Activated naive CD4-positive, alpha-beta T cell treated with anti-CD3 and anti-CD28 coated beads for 36 hours (primary cell): ENCODE measurements at regions of chr20 and their contacts with region 1.

Region 1: DNA sequence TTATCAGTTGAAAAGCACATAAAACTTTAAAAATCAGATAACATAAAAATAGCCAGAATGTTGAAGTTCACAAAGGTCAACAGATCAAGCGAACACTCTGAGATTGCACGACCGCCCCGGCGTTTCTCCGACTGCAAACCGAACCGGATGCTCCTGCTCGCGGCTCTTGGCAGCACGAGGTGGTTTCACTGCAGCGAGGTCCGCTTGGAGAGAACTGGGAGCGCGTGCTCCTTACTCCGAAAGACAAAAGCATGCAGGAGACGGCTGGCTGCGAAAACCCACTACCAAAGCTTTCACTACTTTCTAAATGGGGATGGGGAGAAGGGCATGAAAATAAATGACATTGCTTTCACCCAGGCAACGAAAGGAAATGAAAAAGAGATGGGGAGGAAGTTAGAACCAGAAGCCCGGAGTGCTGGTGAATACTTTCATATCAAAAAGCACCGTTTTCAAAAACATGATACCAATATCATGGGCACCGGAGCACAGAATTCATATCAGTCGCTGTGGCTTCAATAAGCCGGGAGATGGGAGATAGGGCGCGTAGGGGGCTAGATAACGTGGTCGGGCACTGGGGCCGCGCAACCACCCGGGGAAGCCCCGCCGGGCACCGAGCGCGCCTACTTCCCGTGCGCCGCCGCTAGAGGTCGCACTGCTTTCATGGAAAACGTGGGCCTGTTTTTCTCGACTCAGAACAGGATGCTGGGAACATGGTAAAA is 8.3 kb upstream of the ANKRD60 start:
- DNase-seq: peak; percentile 91
- H3K4me3 Mint-ChIP-seq: peak overlapping the region; percentile 83
- H3K27ac Mint-ChIP-seq: peak overlapping the region; percentile 88
- H3K4me1 Mint-ChIP-seq: peaks cover 23% of the 10 kb centered on the region
- H3K27me3 Mint-ChIP-seq: no peaks in the 10 kb centered on the region

Region 2: GRCh38 chr20:57135856-57136255 is 1100.9 kb before region 1 on chr20:
- CTCF ChIA-PET with region 1: no interaction called
- intact Hi-C with region 1: no loop called
- DNase-seq: no peak
- H3K4me3 Mint-ChIP-seq: no peak overlapping the region
- H3K27ac Mint-ChIP-seq: no peak overlapping the region
- H3K4me1 Mint-ChIP-seq: no peaks in the 10 kb centered on the region
- H3K27me3 Mint-ChIP-seq: peaks cover 12% of the 10 kb centered on the region

Region 3: GRCh38 chr20:58388882-58389323 is 152.1 kb after region 1 on chr20 and contains the start of gene VAPB:
- CTCF ChIA-PET with region 1: interaction called, 3 read pairs
- intact Hi-C with region 1: loop called (anchors 5 kb)
- DNase-seq: peak; percentile 96
- H3K4me3 Mint-ChIP-seq: peak within 1 kb of the TSS; percentile 96
- H3K27ac Mint-ChIP-seq: peak within 1 kb of the TSS; percentile 90
- H3K4me1 Mint-ChIP-seq: peaks cover 42% of the 10 kb centered on the region
- H3K27me3 Mint-ChIP-seq: no peaks in the 10 kb centered on the region
- total RNA-seq, gene VAPB: 26.8 to 27.9 TPM

Region 4: GRCh38 chr20:58447511-58448391 is 211.0 kb after region 1 on chr20:
- CTCF ChIA-PET with region 1: interaction called, 7 read pairs
- intact Hi-C with region 1: loop called (anchors 1 kb)
- DNase-seq: peak; percentile 79
- H3K4me3 Mint-ChIP-seq: no peak overlapping the region
- H3K27ac Mint-ChIP-seq: peak overlapping the region; percentile 29
- H3K4me1 Mint-ChIP-seq: no peaks in the 10 kb centered on the region
- H3K27me3 Mint-ChIP-seq: no peaks in the 10 kb centered on the region

Region 5: DNA sequence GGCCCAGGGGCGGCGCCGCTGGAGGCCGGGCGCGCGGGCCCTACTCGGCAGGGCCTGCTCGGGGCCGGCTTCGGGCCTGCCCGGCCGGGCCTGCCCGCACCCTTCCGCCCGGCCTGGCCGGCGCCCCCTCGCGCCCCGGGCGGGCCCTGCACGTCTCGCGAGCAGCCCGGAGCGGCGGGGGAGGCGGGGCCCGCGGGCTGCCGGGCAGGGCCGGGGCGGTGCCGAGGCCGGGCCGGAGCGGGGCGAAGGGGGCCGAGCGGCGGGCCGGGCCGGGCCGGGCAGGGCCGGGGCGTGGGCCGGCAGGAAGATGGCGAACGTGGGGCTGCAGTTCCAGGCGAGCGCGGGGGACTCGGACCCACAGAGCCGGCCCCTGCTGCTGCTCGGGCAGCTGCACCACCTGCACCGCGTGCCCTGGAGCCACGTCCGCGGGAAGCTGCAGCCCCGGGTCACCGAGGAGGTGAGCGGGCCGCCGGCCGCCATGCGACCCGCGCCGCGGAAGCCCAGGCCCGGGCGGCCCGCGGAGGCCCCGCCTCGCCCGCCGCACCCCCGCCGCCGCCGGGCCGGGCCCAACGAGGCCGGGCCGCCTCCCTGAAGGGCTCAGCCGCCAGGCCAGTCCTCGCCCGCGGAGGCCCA is 455.9 kb after region 1 on chr20 and contains the start of gene NPEPL1:
- CTCF ChIA-PET with region 1: no interaction called
- intact Hi-C with region 1: loop called (anchors 5 kb)
- DNase-seq: peak; percentile 64
- H3K4me3 Mint-ChIP-seq: peak within 1 kb of the TSS; percentile 72
- H3K27ac Mint-ChIP-seq: peak within 1 kb of the TSS; percentile 52
- H3K4me1 Mint-ChIP-seq: peaks cover 9% of the 10 kb centered on the region
- H3K27me3 Mint-ChIP-seq: no peaks in the 10 kb centered on the region
- total RNA-seq, gene NPEPL1: 14.3 to 14.5 TPM

Region 6: DNA sequence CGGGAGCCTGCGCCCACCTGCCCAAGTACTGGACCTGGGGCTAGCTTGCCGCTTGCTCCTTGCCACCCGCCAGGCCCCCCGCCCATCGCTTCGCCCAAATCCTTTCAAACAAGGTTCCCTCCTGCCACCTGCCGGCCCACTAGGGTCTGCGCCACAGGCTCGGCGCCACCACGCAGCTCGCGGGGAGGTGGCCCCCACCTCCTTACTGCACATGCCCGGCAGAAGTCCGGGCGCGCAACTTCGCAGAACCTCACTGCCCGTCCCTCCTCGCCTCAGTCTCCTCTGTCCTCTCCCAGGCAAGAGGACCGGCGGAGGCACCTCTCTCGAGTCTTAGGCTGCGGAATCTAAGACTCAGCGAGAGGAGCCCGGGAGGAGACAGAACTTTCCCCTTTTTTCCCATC is 602.7 kb after region 1 on chr20:
- CTCF ChIA-PET with region 1: no interaction called
- intact Hi-C with region 1: loop called (anchors 5 kb)
- DNase-seq: peak; percentile 63
- H3K4me3 Mint-ChIP-seq: peak overlapping the region; percentile 51
- H3K27ac Mint-ChIP-seq: no peak overlapping the region
- H3K4me1 Mint-ChIP-seq: peaks cover 12% of the 10 kb centered on the region
- H3K27me3 Mint-ChIP-seq: peaks cover 44% of the 10 kb centered on the region

Region 7: DNA sequence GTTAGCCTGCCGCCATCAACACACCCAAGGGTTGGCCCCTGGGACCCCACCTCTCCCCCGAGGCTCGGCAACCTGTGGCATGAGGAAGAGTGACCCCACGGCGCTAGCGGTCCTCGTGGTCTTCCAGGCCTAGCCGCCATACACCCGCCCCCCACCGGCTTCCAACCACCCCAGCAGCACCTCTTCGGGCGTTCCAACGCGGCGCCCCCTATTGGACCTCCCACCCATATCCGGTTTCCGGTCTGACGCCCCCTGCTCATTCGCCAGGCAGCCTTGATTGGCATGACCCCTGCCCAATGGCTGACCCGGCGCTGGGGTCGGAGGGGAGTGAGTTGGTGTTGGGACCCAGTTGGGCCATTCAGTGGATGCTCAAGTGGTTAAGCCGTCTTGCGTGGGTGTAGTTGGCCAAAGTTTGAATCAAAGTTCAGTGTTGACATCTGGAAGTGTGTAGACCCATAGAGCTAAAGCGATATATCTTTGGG is 614.0 kb after region 1 on chr20 and contains the start of gene GNAS-AS1:
- CTCF ChIA-PET with region 1: no interaction called
- intact Hi-C with region 1: loop called (anchors 5 kb)
- DNase-seq: peak; percentile 92
- H3K4me3 Mint-ChIP-seq: peak within 1 kb of the TSS; percentile 81
- H3K27ac Mint-ChIP-seq: no peak within 1 kb of the TSS
- H3K4me1 Mint-ChIP-seq: peaks cover 19% of the 10 kb centered on the region
- H3K27me3 Mint-ChIP-seq: peaks cover 27% of the 10 kb centered on the region
- total RNA-seq, gene GNAS-AS1: 1.6 to 1.9 TPM